GM12878 (cell line): ENCODE measurements at regions of chr15 and their contacts with region 1.

Region 1: GRCh38 chr15:54150255-54150654 is 172.0 kb downstream of the UNC13C start:
- DNase-seq: peak; percentile 69
- ATAC-seq: peak; percentile 96
- H3K4me3 ChIP-seq: no peak overlapping the region
- H3K27ac ChIP-seq: no peak overlapping the region
- H3K4me1 ChIP-seq: no peaks in the 10 kb centered on the region
- H3K27me3 ChIP-seq: no peaks in the 10 kb centered on the region
- CTCF ChIP-seq: no peak
- EP300 ChIP-seq: peak; percentile 95
- POLR2A ChIP-seq: no peak
- RAD21 ChIP-seq: peak; percentile 0; the same call in 1 of the 2 replicates

Region 2: DNA sequence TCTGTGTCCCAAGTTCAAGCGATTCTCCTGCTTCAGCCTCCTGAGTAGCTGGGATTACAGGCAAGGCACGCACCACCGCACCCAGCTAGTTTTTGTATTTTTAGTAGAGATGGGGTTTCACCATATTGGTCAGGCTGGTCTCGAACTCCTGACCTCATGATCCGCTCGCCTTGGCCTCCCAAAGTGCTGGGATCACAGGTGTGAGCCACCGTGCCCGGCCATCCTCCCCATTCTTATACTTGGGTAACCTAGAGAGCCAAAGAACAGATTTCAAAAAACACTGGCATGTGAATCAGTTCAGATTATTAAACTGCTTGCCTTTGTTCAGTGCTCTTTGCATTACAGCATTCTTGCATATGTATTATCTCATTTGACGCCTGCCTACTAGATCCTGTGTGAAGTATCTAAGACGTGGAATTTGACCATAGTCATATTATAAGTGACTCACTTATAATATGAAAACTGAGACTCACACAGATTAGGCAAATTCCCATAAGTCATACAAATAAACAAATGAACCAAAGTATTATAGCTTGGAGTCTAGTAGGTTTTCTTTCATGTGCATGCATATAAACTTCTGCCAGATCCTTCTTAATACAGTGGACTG is 48.5 kb before region 1 on chr15:
- CTCF ChIA-PET with region 1: interaction called, 4 read pairs
- POLR2A ChIA-PET with region 1: interaction called, 3 read pairs
- RAD21 ChIA-PET with region 1: interaction called, 15 read pairs
- SMC1A ChIA-PET with region 1: interaction called, 27 read pairs
- in situ Hi-C with region 1: no loop called
- intact Hi-C with region 1: no loop called
- DNase-seq: no peak
- ATAC-seq: peak; percentile 17
- H3K4me3 ChIP-seq: no peak overlapping the region
- H3K27ac ChIP-seq: no peak overlapping the region
- H3K4me1 ChIP-seq: no peaks in the 10 kb centered on the region
- H3K27me3 ChIP-seq: no peaks in the 10 kb centered on the region
- CTCF ChIP-seq: no peak
- EP300 ChIP-seq: no peak
- POLR2A ChIP-seq: no peak
- RAD21 ChIP-seq: no peak

Region 3: DNA sequence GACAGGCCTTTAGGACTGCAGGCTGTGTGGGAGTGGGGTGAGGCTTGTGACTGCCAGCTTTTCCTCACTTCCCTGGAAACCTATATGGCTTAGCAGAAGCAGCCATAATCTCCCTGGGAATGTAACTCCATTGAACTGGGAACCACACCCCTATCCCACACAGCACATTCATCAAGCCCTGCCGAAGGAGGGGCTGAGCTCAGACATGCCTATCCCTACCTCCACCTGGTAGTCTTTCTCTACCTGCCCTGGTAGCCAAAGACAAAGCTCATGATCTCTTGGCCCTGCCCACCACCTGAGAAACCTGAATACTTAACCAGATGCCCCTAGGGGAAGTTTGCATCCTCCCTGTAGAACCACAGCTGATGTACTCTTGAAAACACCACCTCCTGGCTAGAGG is 47.7 kb after region 1 on chr15:
- CTCF ChIA-PET with region 1: no interaction called
- POLR2A ChIA-PET with region 1: no interaction called
- RAD21 ChIA-PET with region 1: interaction called, 6 read pairs
- SMC1A ChIA-PET with region 1: interaction called, 11 read pairs
- in situ Hi-C with region 1: no loop called
- intact Hi-C with region 1: no loop called
- DNase-seq: no peak
- ATAC-seq: no peak
- H3K4me3 ChIP-seq: no peak overlapping the region
- H3K27ac ChIP-seq: no peak overlapping the region
- H3K4me1 ChIP-seq: no peaks in the 10 kb centered on the region
- H3K27me3 ChIP-seq: no peaks in the 10 kb centered on the region
- CTCF ChIP-seq: no peak
- EP300 ChIP-seq: no peak
- POLR2A ChIP-seq: no peak
- RAD21 ChIP-seq: no peak

Region 4: DNA sequence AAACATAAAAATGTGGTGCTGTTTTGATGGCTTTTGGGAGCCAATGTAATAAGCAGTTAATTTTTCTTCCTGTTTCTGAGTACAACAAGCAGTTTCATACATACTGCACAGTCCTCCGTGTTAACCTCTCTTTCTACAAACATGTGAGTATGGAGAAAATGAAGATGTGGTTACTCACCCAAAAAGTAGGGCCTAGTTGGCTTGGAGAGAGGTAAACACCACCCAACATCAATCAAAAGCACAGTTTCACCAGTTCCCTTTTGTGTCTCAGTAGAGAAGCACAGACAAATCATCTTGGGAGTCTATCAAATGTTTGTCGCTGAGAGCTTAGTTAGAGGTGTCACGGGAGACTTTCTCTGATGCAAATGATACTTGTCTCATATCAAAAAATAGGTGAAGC is 148.1 kb after region 1 on chr15:
- CTCF ChIA-PET with region 1: interaction called, 3 read pairs
- POLR2A ChIA-PET with region 1: no interaction called
- RAD21 ChIA-PET with region 1: interaction called, 10 read pairs
- SMC1A ChIA-PET with region 1: interaction called, 4 read pairs
- in situ Hi-C with region 1: no loop called
- intact Hi-C with region 1: no loop called
- DNase-seq: peak; percentile 32
- ATAC-seq: peak; percentile 94
- H3K4me3 ChIP-seq: no peak overlapping the region
- H3K27ac ChIP-seq: no peak overlapping the region
- H3K4me1 ChIP-seq: no peaks in the 10 kb centered on the region
- H3K27me3 ChIP-seq: no peaks in the 10 kb centered on the region
- CTCF ChIP-seq: no peak
- EP300 ChIP-seq: peak; percentile 80 to 88
- POLR2A ChIP-seq: no peak
- RAD21 ChIP-seq: no peak